ENCODE measurements at regions of chr20 and their contacts with region 1.

Region 1: GRCh38 chr20:22346716-22347115 is 237.7 kb downstream of the FOXA2 start:
- DNase-seq: no peak
- ATAC-seq: no peak
- H3K4me3 ChIP-seq: no peak overlapping the region
- H3K27ac ChIP-seq: no peak overlapping the region
- H3K4me1 ChIP-seq: no peaks in the 10 kb centered on the region
- H3K27me3 ChIP-seq: no peaks in the 10 kb centered on the region
- CTCF ChIP-seq: no peak

Region 2: GRCh38 chr20:22264917-22265316 is 81.8 kb before region 1 on chr20:
- intact Hi-C with region 1: no loop called
- DNase-seq: no peak
- ATAC-seq: no peak
- H3K4me3 ChIP-seq: no peak overlapping the region
- H3K27ac ChIP-seq: no peak overlapping the region
- H3K4me1 ChIP-seq: no peaks in the 10 kb centered on the region
- H3K27me3 ChIP-seq: no peaks in the 10 kb centered on the region
- CTCF ChIP-seq: no peak

Region 3: DNA sequence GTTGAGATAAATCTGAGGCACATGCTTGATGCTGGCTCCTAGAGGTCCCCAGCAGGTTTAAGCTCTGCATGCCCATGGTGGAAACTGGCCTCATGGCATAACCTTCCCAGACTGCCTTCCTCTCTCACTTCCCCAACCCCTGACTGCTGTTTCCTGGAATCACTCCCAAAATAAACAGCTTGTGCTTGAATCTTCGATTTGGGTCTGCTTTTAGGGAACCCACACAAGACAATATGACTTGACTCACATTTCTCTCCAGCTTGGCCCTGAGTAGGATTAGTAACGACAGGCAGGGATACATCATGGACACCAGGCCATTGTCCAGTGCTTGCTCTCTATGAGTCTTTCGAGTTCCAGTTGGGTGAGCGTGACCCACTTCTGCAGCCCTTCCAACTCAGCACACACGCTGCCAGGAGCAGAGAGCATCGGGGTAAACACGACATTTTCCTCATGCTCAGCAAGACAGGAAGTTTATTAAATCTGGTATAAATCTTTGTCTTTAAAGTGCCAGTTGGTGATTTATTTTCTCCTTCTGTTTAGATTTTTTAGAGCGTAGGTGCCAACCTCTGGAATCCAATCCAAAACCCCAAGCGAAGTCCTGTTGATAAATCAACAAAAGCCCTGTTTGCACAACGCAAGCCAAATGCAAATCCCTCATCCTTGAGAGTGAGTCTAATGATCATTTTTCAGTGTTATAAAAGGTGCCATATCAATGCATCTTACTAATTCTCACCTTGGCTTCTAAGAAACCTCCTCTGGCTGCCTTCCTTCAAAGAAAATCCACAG is 102.7 kb after region 1 on chr20:
- intact Hi-C with region 1: no loop called
- DNase-seq: peak in 2 of 4 donors; percentile 53 to 82
- ATAC-seq: peak; percentile 53
- H3K4me3 ChIP-seq: no peak overlapping the region
- H3K27ac ChIP-seq: no peak overlapping the region
- H3K4me1 ChIP-seq: peaks cover 4 to 11% of the 10 kb centered on the region in 2 donors
- H3K27me3 ChIP-seq: no peaks in the 10 kb centered on the region
- CTCF ChIP-seq: no peak

Region 4: DNA sequence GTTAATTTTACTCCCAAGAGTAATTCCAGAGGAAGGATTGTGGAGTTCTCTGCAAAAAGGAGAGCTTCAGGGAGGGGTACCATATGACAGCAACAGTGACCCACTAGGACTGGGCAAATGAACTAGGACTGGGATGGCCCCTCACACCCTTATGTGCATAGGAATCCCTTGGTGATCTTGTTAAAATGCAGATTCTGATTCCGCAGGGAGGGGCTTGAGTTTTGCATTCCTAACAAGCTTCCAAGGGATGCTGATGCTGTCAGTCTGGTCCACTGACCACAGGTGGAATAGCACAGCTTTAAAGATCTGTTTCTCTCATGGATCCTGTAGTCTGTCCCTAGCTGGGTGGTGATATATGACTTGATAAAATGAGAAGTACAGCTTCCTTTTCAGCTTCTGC is 243.9 kb after region 1 on chr20:
- intact Hi-C with region 1: loop called in 1 of 2 experiments (anchors 5 kb)
- DNase-seq: no peak
- ATAC-seq: no peak
- H3K4me3 ChIP-seq: no peak overlapping the region
- H3K27ac ChIP-seq: no peak overlapping the region
- H3K4me1 ChIP-seq: no peaks in the 10 kb centered on the region
- H3K27me3 ChIP-seq: peaks cover 41 to 94% of the 10 kb centered on the region in 2 donors
- CTCF ChIP-seq: no peak

Measured in left lung (tissue), 14 donors.